CD4-positive, alpha-beta T cell (primary cell): ENCODE measurements at regions of chr1 and their contacts with region 1.

Region 1: GRCh38 chr1:170074250-170075157 is at the start of gene KIFAP3:
- DNase-seq: peak; percentile 88 to 99 (median 93)
- ATAC-seq: peak; percentile 95
- H3K4me3 ChIP-seq: peak within 1 kb of the TSS; percentile 83
- H3K4me3 Mint-ChIP-seq: peak within 1 kb of the TSS; percentile 97
- H3K27ac ChIP-seq: peak within 1 kb of the TSS; percentile 77 to 83
- H3K27ac Mint-ChIP-seq: peak within 1 kb of the TSS; percentile 85
- H3K4me1 ChIP-seq: peaks cover 15% of the 10 kb centered on the region
- H3K4me1 Mint-ChIP-seq: peaks cover 54% of the 10 kb centered on the region
- H3K27me3 ChIP-seq: no peaks in the 10 kb centered on the region
- H3K27me3 Mint-ChIP-seq: no peaks in the 10 kb centered on the region
- CTCF ChIP-seq: peak; percentile 69
- total RNA-seq, gene KIFAP3: 12.1 to 12.6 TPM

Region 2: DNA sequence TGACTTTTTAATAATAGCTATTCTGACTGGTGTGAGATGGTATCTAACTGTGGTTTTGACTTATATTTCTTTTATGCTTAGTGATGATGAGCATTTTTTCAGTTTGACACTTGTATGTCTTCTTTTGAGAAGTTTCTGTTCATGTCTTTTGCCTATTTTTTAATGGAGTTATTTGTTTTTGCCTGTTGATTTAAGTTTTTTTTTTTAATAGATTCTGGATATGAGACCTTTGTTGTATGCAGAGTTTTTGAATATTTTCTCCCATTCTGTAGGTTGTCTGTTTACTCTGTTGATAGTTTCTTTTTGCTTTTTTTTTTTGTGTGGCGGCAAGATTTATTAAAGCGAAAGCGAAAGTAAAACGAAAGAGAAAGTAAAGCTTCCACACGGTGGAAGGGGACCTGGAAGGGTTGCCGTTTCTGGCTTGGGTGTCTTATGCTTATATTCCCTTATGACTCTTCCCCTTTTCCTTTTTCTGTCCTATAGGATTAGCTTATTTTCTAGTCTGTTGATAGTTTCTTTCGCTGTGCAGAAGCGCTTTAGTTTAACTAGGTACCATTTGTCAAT is 1726.3 kb before region 1 on chr1:
- CTCF ChIA-PET with region 1: no interaction called
- POLR2A ChIA-PET with region 1: no interaction called
- intact Hi-C with region 1: loop called in 1 of 2 experiments (anchors 5 kb)
- DNase-seq: peak in 5 of 14 experiments; percentile 7 to 77 (median 70)
- ATAC-seq: peak; percentile 58
- H3K4me3 ChIP-seq: peak overlapping the region; percentile 52
- H3K4me3 Mint-ChIP-seq: peak overlapping the region; percentile 94
- H3K27ac ChIP-seq: no peak overlapping the region
- H3K27ac Mint-ChIP-seq: peak overlapping the region; percentile 92
- H3K4me1 ChIP-seq: peaks cover 9% of the 10 kb centered on the region
- H3K4me1 Mint-ChIP-seq: peaks cover 33% of the 10 kb centered on the region
- H3K27me3 ChIP-seq: no peaks in the 10 kb centered on the region
- H3K27me3 Mint-ChIP-seq: no peaks in the 10 kb centered on the region
- CTCF ChIP-seq: no peak

Region 3: DNA sequence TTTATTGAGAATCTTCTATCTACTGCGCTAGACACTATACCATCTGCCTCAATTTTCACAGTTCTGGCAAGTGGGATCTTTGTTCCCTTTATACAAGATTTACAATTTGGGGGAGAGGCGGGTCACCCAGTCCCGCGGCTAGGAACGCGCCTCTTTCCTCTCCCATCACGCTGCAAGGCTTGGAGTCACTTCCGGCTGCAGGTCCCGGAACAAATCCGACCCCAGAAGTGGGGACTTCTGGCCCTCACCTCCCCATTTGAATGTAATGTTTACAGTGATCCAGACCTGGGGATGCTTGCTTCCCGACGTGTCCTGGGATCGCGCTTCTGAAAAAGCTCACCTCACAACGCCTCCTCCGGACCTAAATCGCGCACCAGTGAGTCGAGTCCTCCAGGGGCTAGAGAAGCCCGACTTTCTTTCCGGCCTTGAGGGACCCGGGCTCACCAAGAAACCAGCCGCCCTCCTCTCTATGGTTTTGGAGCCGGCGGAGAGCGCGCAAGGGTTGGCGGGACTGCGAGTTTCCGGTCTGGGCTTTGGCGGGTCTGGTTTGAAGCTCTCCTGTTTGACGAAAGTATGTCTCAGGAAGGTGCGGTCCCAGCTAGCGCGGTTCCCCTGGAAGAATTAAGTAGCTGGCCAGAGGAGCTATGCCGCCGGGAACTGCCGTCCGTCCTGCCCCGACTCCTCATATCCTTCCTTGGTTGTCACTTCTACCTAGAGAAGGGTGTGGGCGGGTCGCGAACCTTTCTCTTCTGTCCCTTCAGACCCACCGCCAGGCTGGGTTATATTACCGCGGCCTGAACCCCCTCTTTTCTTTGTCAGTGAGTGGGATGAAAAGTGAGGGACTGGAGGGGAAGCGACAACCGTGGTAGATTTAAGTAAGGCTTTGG is 279.7 kb before region 1 on chr1 and contains the start of gene METTL18:
- CTCF ChIA-PET with region 1: interaction called, 3 read pairs
- POLR2A ChIA-PET with region 1: no interaction called
- intact Hi-C with region 1: loop called in 1 of 2 experiments (anchors 5 kb)
- DNase-seq: peak; percentile 82 to 96 (median 88)
- ATAC-seq: peak; percentile 97
- H3K4me3 ChIP-seq: peak within 1 kb of the TSS; percentile 81
- H3K4me3 Mint-ChIP-seq: peak within 1 kb of the TSS; percentile 99
- H3K27ac ChIP-seq: peak within 1 kb of the TSS; percentile 89 to 94
- H3K27ac Mint-ChIP-seq: peak within 1 kb of the TSS; percentile 94
- H3K4me1 ChIP-seq: peaks cover 13% of the 10 kb centered on the region
- H3K4me1 Mint-ChIP-seq: peaks cover 52% of the 10 kb centered on the region
- H3K27me3 ChIP-seq: no peaks in the 10 kb centered on the region
- H3K27me3 Mint-ChIP-seq: no peaks in the 10 kb centered on the region
- CTCF ChIP-seq: no peak
- total RNA-seq, gene METTL18: 5.1 to 5.6 TPM

Region 4: DNA sequence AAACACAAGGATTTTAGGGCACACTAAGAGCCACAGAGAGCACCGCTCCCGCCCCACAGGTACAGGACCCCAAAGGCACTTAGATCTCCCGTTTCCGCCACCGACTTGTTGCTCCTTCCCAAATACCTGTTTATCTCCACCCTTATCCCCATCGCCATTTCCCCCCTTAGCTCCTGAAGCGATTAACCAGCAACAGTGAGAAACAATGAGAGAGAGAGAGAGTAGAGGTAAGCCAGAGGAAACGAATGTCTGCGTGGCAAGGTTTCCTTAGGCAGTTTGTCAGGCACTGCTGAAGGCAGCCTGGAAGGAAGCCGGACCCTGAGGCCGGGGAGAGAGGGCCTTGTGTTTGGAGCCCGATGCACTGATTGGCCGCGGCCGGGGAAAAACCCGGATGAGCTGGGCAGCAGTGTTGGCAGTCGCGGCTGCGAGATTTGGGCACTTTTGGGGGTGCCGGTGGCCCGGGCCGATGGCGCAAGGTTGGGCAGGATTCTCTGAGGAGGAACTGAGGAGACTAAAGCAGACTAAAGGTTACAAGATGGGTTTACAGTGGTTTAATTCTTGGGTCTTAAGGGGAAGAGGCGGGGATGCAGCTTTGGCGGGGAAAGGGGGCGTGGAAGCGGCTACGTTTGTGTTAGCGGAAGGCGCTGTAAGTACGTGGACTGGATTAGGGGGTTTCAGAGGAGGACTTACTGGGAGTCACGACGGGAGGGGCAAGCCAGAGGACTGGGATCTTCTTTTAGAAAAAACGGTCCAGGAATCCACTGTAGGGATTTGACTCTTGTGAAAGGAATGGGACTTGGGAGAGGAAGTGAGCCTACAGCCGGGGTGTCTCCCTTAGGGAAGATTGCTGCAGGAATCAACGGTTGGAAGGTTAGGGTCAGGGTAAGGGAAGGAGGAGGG is 457.5 kb after region 1 on chr1 and contains the start of gene GORAB:
- CTCF ChIA-PET with region 1: no interaction called
- POLR2A ChIA-PET with region 1: interaction called, 4 read pairs
- intact Hi-C with region 1: loop called (anchors 5 to 10 kb)
- DNase-seq: peak; percentile 69 to 92 (median 78)
- ATAC-seq: peak; percentile 91
- H3K4me3 ChIP-seq: peak within 1 kb of the TSS; percentile 61
- H3K4me3 Mint-ChIP-seq: no peak within 1 kb of the TSS
- H3K27ac ChIP-seq: peak within 1 kb of the TSS; percentile 73 to 86
- H3K27ac Mint-ChIP-seq: no peak within 1 kb of the TSS
- H3K4me1 ChIP-seq: peaks cover 12% of the 10 kb centered on the region
- H3K4me1 Mint-ChIP-seq: peaks cover 20% of the 10 kb centered on the region
- H3K27me3 ChIP-seq: no peaks in the 10 kb centered on the region
- H3K27me3 Mint-ChIP-seq: no peaks in the 10 kb centered on the region
- CTCF ChIP-seq: no peak
- total RNA-seq, gene GORAB: 23.0 to 26.6 TPM